Activated CD4-positive, alpha-beta memory T cell treated with anti-CD3 and anti-CD28 coated beads for 36 hours (primary cell): ENCODE measurements at regions of chr19 and their contacts with region 1.

Region 1: DNA sequence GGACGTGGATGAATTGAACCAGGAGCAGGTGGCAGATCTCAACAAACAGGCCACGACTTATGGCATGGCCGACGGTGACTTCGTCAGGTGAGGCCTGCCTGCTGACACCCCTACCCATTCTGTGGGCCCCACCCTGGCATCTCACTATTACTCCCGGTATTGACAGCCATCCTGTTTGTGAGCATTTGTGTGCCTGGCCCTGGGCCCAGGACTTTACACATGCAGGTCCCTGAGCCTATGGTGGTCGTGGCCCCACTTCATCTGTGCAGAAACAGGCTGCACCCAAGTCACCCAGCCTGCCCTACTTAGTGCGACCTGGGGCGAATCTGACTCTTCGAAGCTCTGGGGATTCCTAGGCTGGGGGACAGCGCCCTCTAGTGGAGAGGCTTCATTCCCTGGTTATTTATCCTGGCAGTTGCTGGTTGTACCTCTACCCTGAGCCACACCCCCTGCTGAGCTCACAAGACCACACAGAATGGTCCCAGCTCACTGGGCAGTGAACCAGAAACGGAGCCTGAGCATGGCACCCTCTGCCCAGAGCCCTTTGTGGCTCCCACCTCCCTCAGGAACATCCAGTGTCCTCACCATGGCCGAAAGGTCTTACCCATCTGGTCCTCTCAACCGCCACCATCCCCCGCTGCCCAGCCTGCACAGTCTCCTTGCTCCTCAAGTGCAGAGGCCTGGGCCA is 16.9 kb downstream of the ZNF296 start:
- DNase-seq: peak; percentile 87
- H3K4me3 Mint-ChIP-seq: no peak overlapping the region
- H3K27ac Mint-ChIP-seq: no peak overlapping the region
- H3K4me1 Mint-ChIP-seq: no peaks in the 10 kb centered on the region
- H3K27me3 Mint-ChIP-seq: no peaks in the 10 kb centered on the region

Region 2: DNA sequence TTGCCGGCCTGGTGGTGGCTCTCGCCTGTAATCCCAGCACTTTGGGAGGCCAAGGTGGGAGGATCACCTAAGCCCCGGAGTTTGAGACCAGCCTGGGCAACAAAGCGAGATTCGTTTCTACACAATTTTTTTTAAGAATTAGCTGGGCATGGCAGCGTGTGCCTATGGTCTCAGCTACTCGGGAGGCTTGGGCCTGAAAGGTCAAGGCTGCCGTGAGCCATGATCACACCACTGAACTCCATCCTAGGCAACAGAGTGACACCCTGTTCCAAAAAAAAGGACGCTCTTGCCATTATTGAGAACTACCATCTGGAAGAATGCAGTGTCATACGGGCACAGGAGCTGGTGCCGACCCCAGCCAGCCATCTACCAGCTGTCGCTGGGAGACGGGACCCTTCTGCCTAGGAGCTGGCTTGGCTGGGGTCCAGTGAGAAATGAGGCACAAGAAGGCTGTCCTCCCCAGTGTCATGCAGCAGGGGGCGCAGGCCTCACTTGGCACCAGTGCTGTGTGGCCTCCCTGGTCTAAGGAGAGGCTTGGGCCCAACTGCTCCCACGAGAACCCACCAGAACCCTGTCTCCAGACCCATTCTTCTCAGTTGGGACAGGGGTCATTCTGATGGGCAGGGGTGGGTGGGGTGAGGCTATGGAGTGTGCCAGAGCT is 70.4 kb before region 1 on chr19:
- CTCF ChIA-PET with region 1: interaction called, 48 read pairs
- POLR2A ChIA-PET with region 1: no interaction called
- intact Hi-C with region 1: loop called (anchors 1 kb)
- DNase-seq: peak; percentile 75
- H3K4me3 Mint-ChIP-seq: no peak overlapping the region
- H3K27ac Mint-ChIP-seq: no peak overlapping the region
- H3K4me1 Mint-ChIP-seq: no peaks in the 10 kb centered on the region
- H3K27me3 Mint-ChIP-seq: no peaks in the 10 kb centered on the region

Region 3: GRCh38 chr19:45016388-45017319 is 42.8 kb before region 1 on chr19:
- CTCF ChIA-PET with region 1: interaction called, 6 read pairs
- POLR2A ChIA-PET with region 1: no interaction called
- intact Hi-C with region 1: loop called (anchors 1 kb)
- DNase-seq: peak; percentile 91
- H3K4me3 Mint-ChIP-seq: peak overlapping the region; percentile 34
- H3K27ac Mint-ChIP-seq: peak overlapping the region; percentile 90
- H3K4me1 Mint-ChIP-seq: peaks cover 17% of the 10 kb centered on the region
- H3K27me3 Mint-ChIP-seq: no peaks in the 10 kb centered on the region

Region 4: GRCh38 chr19:45385392-45386221 is 326.2 kb after region 1 on chr19:
- CTCF ChIA-PET with region 1: no interaction called
- POLR2A ChIA-PET with region 1: no interaction called
- intact Hi-C with region 1: no loop called
- DNase-seq: no peak
- H3K4me3 Mint-ChIP-seq: no peak overlapping the region
- H3K27ac Mint-ChIP-seq: no peak overlapping the region
- H3K4me1 Mint-ChIP-seq: no peaks in the 10 kb centered on the region
- H3K27me3 Mint-ChIP-seq: peaks cover 23% of the 10 kb centered on the region